ENCODE measurements at regions of chr1 and their contacts with region 1.

Region 1: GRCh38 chr1:227429447-227430359 is 111.4 kb upstream of the CDC42BPA start:
- DNase-seq: no peak
- H3K4me3 ChIP-seq: peak overlapping the region in 1 of 2 donors; percentile 20
- H3K27ac ChIP-seq: peak overlapping the region; percentile 55 to 74
- H3K4me1 ChIP-seq: peaks cover 0 to 49% (median 29%) of the 10 kb centered on the region in 4 donors
- H3K27me3 ChIP-seq: no peaks in the 10 kb centered on the region
- CTCF ChIP-seq: no peak

Region 2: DNA sequence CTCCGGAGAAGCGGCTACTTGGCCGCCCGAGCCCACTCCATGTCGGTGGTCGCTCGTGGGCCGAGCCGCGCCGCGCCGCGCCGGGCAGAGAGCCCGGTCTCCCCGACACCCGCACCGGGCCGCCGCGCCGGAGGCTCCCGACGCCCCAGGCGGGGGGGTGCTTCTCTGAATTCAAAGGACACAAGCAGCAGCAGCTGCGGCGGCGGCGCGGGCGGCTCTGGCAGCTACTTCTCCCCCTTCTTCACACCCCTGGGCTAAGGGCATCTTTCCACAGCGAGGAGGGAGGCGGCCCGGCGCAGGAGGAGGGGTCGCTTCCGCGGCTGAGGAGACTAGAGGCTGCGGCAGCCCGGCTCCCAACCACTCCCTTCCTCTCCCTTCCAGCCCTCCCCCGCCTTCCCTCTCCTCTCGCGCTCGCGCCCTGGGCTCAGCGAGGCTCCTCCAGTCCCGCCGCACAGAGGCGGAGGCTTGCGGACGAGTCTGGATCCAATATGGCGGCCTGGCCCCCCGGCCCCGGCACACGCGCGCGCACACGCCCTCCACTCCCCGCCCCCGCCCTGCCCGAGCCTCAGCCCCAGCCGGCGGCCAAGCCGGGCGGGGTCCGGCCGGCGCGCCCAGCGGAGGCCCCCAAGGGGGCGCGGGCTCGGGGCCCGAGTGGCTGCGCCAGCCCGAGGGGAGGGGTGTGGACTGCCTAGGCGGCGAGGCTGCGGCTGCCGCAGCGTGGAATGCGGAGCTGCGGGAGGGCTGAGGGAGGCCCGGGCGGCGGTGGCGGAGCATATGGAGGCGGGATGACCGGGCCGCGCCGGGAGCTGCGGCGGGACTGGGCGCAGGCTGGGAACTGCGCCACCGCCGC is 111.5 kb before region 1 on chr1 and contains the start of gene CDC42BPA:
- intact Hi-C with region 1: loop called (anchors 5 kb)
- DNase-seq: peak; percentile 82 to 90
- H3K4me3 ChIP-seq: peak within 1 kb of the TSS; percentile 88 to 94
- H3K27ac ChIP-seq: peak within 1 kb of the TSS; percentile 97 to 98
- H3K4me1 ChIP-seq: peaks cover 0 to 16% (median 0%) of the 10 kb centered on the region in 4 donors
- H3K27me3 ChIP-seq: no peaks in the 10 kb centered on the region
- CTCF ChIP-seq: no peak

Measured in tibial artery (tissue), 4 donors.